ENCODE measurements at regions of chr9 and their contacts with region 1.

Region 1: GRCh38 chr9:114929201-114929600 is 1.2 kb downstream of the TNFSF8 start:
- DNase-seq: no peak
- ATAC-seq: no peak
- H3K4me3 ChIP-seq: no peak overlapping the region
- H3K27ac ChIP-seq: no peak overlapping the region
- H3K4me1 ChIP-seq: no peaks in the 10 kb centered on the region
- H3K27me3 ChIP-seq: peaks cover 67% of the 10 kb centered on the region
- CTCF ChIP-seq: no peak
- POLR2A ChIP-seq: no peak
- RAD21 ChIP-seq: no peak

Region 2: DNA sequence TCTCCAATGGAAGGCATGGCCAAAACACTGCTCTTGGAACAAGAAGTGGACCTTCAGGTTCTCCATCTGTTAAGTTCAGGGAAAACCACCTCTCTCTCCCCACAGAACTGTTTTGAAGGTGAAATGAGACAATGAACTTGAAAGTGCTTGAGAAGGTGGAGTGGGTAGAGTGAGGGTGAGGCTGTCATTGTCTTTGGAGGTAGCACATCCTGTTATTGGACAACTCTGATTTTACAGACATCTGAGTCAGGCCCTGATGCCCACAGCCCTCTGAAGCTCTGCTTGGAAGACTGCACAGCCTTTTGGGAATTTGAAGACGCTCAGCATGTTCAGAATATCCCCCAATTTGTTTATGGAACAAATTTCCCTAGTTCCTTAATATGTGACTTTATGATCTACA is 219.6 kb before region 1 on chr9:
- CTCF ChIA-PET with region 1: no interaction called
- POLR2A ChIA-PET with region 1: no interaction called
- dilution Hi-C with region 1: no loop called
- in situ Hi-C with region 1: no loop called
- intact Hi-C with region 1: no loop called
- DNase-seq: no peak
- ATAC-seq: no peak
- H3K4me3 ChIP-seq: no peak overlapping the region
- H3K27ac ChIP-seq: no peak overlapping the region
- H3K4me1 ChIP-seq: no peaks in the 10 kb centered on the region
- H3K27me3 ChIP-seq: peaks cover 43% of the 10 kb centered on the region
- CTCF ChIP-seq: no peak
- POLR2A ChIP-seq: no peak
- RAD21 ChIP-seq: no peak

Region 3: GRCh38 chr9:115106642-115107041 is 177.4 kb after region 1 on chr9:
- CTCF ChIA-PET with region 1: no interaction called
- POLR2A ChIA-PET with region 1: interaction called, 16 read pairs
- dilution Hi-C with region 1: no loop called
- in situ Hi-C with region 1: no loop called
- intact Hi-C with region 1: no loop called
- DNase-seq: peak; percentile 60
- ATAC-seq: 0 out of 2 replicates have a peak, but pooled peaks have one; percentile 19
- H3K4me3 ChIP-seq: no peak overlapping the region
- H3K27ac ChIP-seq: no peak overlapping the region
- H3K4me1 ChIP-seq: peaks cover 5% of the 10 kb centered on the region; the same call in 1 of the 2 replicates
- H3K27me3 ChIP-seq: no peaks in the 10 kb centered on the region
- CTCF ChIP-seq: no peak
- POLR2A ChIP-seq: no peak; the same call in 1 of the 2 replicates
- RAD21 ChIP-seq: no peak

Region 4: DNA sequence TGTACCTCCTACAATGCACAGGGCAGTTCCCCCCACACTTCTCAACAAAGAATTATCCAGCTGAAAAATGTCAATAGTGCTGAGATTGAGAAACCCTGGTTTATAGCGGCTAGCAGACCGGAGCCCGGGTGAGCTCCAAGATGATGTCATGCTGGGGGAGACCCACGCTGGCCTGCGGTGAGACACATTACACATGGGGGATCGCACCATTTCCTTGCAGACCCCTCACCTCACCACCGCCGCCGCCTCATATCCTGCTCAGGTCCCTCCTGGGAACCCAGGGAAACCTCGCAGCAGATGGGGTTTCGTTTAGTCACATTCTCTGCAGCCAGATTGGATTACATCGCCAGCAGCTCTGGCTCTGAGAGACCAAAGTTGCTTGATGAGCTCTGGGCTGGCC is 203.4 kb after region 1 on chr9:
- CTCF ChIA-PET with region 1: no interaction called
- POLR2A ChIA-PET with region 1: no interaction called
- dilution Hi-C with region 1: no loop called
- in situ Hi-C with region 1: no loop called
- intact Hi-C with region 1: no loop called
- DNase-seq: peak; percentile 89
- ATAC-seq: peak; percentile 66
- H3K4me3 ChIP-seq: peak overlapping the region; percentile 2; the same call in 1 of the 2 replicates
- H3K27ac ChIP-seq: peak overlapping the region; percentile 74
- H3K4me1 ChIP-seq: peaks cover 18% of the 10 kb centered on the region
- H3K27me3 ChIP-seq: no peaks in the 10 kb centered on the region
- CTCF ChIP-seq: no peak
- POLR2A ChIP-seq: no peak
- RAD21 ChIP-seq: 0 out of 2 replicates have a peak, but pooled peaks have one; percentile 6